Spleen (tissue), 13 donors: ENCODE measurements at regions of chr1 and their contacts with region 1.

Region 1: GRCh38 chr1:6801966-6802365 is 16.7 kb downstream of the CAMTA1 start:
- DNase-seq: no peak
- H3K4me3 ChIP-seq: no peak overlapping the region
- H3K27ac ChIP-seq: no peak overlapping the region
- H3K4me1 ChIP-seq: peaks cover 8 to 85% (median 56%) of the 10 kb centered on the region in 6 donors
- H3K27me3 ChIP-seq: no peaks in the 10 kb centered on the region
- CTCF ChIP-seq: no peak
- POLR2A ChIP-seq: no peak

Region 2: GRCh38 chr1:6401673-6402072 is 400.3 kb before region 1 on chr1:
- intact Hi-C with region 1: no loop called
- DNase-seq: no peak
- H3K4me3 ChIP-seq: no peak overlapping the region
- H3K27ac ChIP-seq: no peak overlapping the region
- H3K4me1 ChIP-seq: peaks cover 0 to 40% (median 16%) of the 10 kb centered on the region in 6 donors
- H3K27me3 ChIP-seq: peaks cover 0 to 13% (median 0%) of the 10 kb centered on the region in 7 donors
- CTCF ChIP-seq: no peak
- POLR2A ChIP-seq: no peak

Region 3: DNA sequence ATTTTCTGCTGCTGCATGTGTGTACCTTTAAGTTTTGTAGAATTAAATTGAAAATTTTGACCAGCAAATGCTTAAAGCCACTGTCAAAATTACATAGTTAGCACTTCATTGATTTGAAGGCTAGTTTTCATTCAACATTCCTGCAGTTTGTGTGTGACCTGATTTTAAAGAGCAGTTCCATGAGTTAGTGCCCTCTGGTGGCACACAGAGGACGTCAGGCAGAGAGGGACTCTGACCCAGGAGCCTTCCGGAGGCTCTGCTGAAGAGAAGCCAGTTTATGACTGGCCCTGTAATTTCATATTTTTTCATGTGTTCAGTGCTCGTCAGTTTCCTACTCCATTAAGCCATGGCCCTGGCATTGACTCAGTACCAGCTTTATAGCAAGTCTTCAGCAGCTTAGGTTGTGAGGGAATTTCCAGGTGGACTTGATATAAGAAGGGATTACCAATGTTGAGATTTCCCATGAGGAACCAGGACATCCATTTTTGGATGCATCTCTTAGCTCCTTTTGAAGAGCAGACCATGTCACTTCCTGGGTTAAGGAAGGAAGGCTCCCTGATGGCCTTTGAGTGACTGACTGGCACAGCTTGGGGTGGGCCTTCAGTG is 88.0 kb after region 1 on chr1:
- intact Hi-C with region 1: loop called (anchors 5 kb)
- DNase-seq: no peak
- H3K4me3 ChIP-seq: no peak overlapping the region
- H3K27ac ChIP-seq: no peak overlapping the region
- H3K4me1 ChIP-seq: peaks cover 0 to 10% (median 4%) of the 10 kb centered on the region in 6 donors
- H3K27me3 ChIP-seq: no peaks in the 10 kb centered on the region
- CTCF ChIP-seq: peak; percentile 32 to 88 (median 77)
- POLR2A ChIP-seq: no peak